Activated CD8-positive, alpha-beta memory T cell treated with anti-CD3 and anti-CD28 coated beads, Interleukin-2, amount 10 ng/mL, durations not matched to agents 7 days and 5 days (primary cell): ENCODE measurements at regions of chr1 and their contacts with region 1.

Region 1: DNA sequence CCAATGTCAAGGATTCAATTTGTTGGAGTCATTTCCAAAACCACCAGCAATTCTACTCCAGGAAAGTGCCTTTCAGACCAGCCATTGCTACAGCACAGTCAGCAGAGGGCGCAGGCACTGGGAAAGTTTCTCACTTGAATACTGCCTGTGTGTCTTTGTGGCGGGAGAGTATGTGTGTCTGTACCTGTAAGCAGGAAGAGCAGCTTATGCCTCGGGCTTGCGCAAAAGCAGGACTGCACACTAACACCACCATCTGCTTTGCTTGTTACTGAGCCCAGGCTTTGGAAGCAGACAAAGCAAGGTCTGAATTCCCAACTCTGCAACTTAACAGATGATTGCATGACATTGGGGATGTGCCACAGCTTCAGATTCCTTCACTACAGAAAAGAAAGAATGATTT is 7.0 kb upstream of the CTSE start:
- DNase-seq: peak; percentile 75
- ATAC-seq: peak; percentile 95
- H3K4me3 Mint-ChIP-seq: no peak overlapping the region
- H3K27ac Mint-ChIP-seq: no peak overlapping the region
- H3K4me1 Mint-ChIP-seq: peaks cover 6% of the 10 kb centered on the region
- H3K27me3 Mint-ChIP-seq: peaks cover 75% of the 10 kb centered on the region

Region 2: GRCh38 chr1:206050655-206051235 is 20.0 kb after region 1 on chr1:
- CTCF ChIA-PET with region 1: interaction called, 15 read pairs
- DNase-seq: peak; percentile 50
- ATAC-seq: peak; percentile 70
- H3K4me3 Mint-ChIP-seq: no peak overlapping the region
- H3K27ac Mint-ChIP-seq: peak overlapping the region; percentile 22
- H3K4me1 Mint-ChIP-seq: peaks cover 25% of the 10 kb centered on the region
- H3K27me3 Mint-ChIP-seq: peaks cover 24% of the 10 kb centered on the region

Region 3: DNA sequence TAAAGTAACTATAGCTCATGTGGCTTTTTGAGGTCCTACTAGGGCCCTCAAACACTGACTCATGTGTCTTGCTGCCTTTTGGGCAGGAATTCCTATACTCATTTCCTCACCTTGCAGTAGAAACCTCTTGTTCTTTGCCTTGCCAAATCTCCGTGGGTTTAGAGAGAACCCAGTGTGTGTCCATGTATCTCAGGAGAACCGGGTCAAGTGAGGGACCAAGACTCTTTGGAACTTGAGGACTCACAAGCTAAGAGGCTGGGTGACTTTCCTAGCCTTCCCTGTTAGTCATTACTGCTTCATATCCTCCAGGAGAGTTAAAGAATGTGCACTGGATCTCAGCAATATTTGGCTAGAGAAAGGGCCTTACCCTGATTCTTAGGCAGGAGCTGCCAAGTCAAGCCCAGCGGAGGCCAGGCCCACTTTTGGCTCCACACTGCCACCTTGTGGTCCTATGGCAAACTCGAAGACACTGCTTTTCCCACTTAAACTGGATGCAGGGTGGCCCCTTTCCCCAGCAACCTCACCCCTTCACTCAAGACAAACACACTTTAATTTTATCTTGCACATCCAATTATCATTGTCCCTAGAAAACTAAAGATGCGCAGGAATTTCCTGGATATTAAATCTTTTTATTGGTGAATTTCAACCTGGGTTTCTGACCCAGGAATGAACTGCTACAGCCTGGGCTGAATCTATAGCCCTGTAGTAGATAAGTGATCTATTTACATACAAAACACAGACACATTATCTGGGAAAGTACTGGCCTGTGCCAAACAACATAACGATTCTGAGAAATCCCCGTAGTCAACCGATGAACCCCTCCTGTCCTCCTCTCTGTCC is 75.8 kb after region 1 on chr1:
- CTCF ChIA-PET with region 1: interaction called, 129 read pairs
- DNase-seq: peak; percentile 81
- ATAC-seq: peak; percentile 92
- H3K4me3 Mint-ChIP-seq: no peak overlapping the region
- H3K27ac Mint-ChIP-seq: no peak overlapping the region
- H3K4me1 Mint-ChIP-seq: no peaks in the 10 kb centered on the region
- H3K27me3 Mint-ChIP-seq: peaks cover 17% of the 10 kb centered on the region